ENCODE measurements at regions of chr3 and their contacts with region 1.

Region 1: DNA sequence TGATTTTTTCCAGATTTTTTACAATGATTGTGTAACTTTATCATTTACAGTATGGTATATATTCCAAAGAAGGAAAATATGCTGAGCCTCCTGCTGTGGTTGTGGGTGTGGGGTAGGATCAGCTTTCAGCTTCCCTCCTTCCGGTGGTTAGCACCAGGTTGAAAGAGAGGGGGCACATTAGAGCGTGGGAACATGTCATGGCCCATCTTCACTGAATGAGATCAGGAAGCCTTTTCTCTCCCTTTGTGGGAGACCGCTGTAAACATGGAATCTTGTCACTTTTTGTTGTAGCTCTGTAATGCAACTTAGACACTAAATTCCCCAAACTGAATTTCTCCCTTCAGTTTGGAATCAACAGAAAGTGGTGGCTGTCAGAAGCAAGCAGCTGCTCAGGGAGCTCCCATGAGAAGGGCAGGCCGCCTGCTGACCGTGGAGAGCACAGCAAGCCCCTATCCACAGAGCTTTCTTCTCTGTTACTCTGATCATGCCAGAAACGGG is 86.7 kb upstream of the LIMD1 start:
- DNase-seq: peak; percentile 87
- ATAC-seq: peak; percentile 64
- H3K4me3 ChIP-seq: no peak overlapping the region
- H3K27ac ChIP-seq: peak overlapping the region; percentile 27
- H3K4me1 ChIP-seq: peaks cover 29% of the 10 kb centered on the region
- H3K27me3 ChIP-seq: no peaks in the 10 kb centered on the region
- CTCF ChIP-seq: peak; percentile 62
- POLR2A ChIP-seq: peak; percentile 55
- RAD21 ChIP-seq: peak; percentile 64

Region 2: DNA sequence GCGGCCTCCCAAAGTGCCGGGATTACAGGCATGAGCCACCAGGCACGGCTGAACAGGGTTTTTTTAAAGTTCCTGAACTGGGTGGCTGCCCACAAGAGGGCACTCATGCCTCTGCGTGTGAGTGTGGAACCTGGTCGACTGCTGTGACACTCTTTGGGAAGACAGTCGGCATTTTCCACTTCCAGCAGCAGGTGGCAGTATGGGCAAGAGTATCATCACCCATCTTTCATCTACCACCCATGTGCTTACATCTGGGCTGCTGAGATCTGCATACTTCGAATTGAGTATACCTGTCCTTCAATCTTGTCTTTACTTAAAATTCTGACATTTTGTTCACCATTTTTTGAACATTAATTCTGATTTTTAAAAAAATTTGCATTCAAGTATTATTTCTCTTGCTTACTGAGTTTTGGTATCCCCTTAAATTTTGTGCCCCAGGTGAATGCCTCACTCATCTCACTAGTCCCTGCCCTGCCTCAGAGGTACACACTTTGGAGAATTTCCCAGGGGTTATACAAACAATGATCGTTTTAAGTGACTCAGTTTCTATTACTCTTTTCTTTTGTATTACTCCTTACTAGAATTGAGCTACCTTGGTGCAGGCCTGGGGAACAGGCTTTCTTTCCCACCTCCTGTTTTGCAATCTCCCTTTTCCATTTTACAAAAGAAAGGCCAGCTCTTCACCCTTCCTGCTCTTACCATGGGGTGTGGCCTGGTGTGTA is 470.0 kb before region 1 on chr3:
- CTCF ChIA-PET with region 1: interaction called, 27 read pairs
- POLR2A ChIA-PET with region 1: no interaction called
- dilution Hi-C with region 1: loop called (anchors 25 kb)
- in situ Hi-C with region 1: loop called (anchors 5 kb)
- intact Hi-C with region 1: loop called (anchors 1 kb)
- DNase-seq: peak; percentile 93
- ATAC-seq: peak; percentile 70
- H3K4me3 ChIP-seq: no peak overlapping the region
- H3K27ac ChIP-seq: no peak overlapping the region
- H3K4me1 ChIP-seq: peaks cover 20% of the 10 kb centered on the region
- H3K27me3 ChIP-seq: no peaks in the 10 kb centered on the region
- CTCF ChIP-seq: peak; percentile 98
- POLR2A ChIP-seq: 0 out of 2 replicates have a peak, but pooled peaks have one; percentile 44
- RAD21 ChIP-seq: peak; percentile 98

Region 3: GRCh38 chr3:45055411-45056143 is 452.3 kb before region 1 on chr3:
- CTCF ChIA-PET with region 1: no interaction called
- POLR2A ChIA-PET with region 1: no interaction called
- dilution Hi-C with region 1: no loop called
- in situ Hi-C with region 1: no loop called
- intact Hi-C with region 1: loop called (anchors 5 kb)
- DNase-seq: peak; percentile 96
- ATAC-seq: peak; percentile 68
- H3K4me3 ChIP-seq: peak overlapping the region; percentile 44; the same call in 1 of the 2 replicates
- H3K27ac ChIP-seq: peak overlapping the region; percentile 98
- H3K4me1 ChIP-seq: peaks cover 21% of the 10 kb centered on the region
- H3K27me3 ChIP-seq: no peaks in the 10 kb centered on the region
- CTCF ChIP-seq: peak; percentile 20; the same call in 1 of the 2 replicates
- POLR2A ChIP-seq: no peak
- RAD21 ChIP-seq: no peak

Region 4: DNA sequence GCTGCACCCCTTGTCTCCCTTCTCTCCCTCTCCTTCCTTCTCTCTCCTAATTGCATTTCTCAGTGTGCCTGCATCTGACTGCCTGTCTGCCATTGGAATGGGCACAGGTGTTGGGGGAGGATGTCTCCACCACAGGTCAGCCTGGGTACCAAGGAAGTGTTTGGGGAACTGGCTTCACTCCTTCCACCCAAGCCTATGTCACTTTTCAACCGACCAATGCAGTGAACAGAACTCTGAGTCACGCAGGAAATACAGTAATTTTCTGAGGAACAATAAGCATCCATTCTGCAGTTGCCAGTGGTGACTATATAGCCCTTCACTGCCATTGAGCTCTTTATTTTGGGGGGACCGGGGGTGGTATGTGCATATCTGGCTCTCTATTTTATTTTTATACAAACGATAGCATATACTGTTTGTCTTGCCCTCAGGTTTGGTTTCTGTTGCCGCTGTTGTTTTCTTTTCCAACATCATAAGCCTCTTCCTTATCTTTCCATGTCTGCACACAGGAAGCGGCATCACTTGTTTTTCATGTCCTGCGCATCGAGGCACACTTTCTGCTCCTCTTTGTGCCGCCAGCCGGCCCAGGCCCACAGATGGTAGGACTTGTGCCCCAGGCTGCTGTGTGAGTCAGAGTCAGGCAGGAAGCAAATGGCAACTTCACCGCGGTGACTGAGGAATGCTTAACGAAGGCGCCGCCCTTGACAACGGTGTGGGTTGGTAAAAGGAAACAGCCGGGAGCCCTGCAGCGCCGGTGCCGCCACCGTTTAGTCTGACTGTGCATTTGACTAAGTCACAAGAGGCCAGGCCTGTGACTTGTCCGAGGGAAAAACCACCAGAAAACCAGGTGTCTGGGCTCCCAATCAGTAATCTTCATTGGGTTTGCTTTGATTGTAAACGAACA is 340.6 kb before region 1 on chr3:
- CTCF ChIA-PET with region 1: no interaction called
- POLR2A ChIA-PET with region 1: no interaction called
- dilution Hi-C with region 1: no loop called
- in situ Hi-C with region 1: no loop called
- intact Hi-C with region 1: no loop called
- DNase-seq: peak; percentile 94
- ATAC-seq: peak; percentile 94
- H3K4me3 ChIP-seq: peak overlapping the region; percentile 6; the same call in 1 of the 2 replicates
- H3K27ac ChIP-seq: peak overlapping the region; percentile 78
- H3K4me1 ChIP-seq: peaks cover 17% of the 10 kb centered on the region
- H3K27me3 ChIP-seq: no peaks in the 10 kb centered on the region
- CTCF ChIP-seq: no peak
- POLR2A ChIP-seq: peak; percentile 57; the same call in 1 of the 2 replicates
- RAD21 ChIP-seq: no peak; the same call in 1 of the 2 replicates

Region 5: GRCh38 chr3:45477838-45478237 is 30.0 kb before region 1 on chr3:
- CTCF ChIA-PET with region 1: no interaction called
- POLR2A ChIA-PET with region 1: no interaction called
- dilution Hi-C with region 1: no loop called
- in situ Hi-C with region 1: no loop called
- intact Hi-C with region 1: no loop called
- DNase-seq: no peak
- ATAC-seq: no peak
- H3K4me3 ChIP-seq: no peak overlapping the region
- H3K27ac ChIP-seq: no peak overlapping the region
- H3K4me1 ChIP-seq: peaks cover 9% of the 10 kb centered on the region
- H3K27me3 ChIP-seq: no peaks in the 10 kb centered on the region
- CTCF ChIP-seq: no peak
- POLR2A ChIP-seq: no peak
- RAD21 ChIP-seq: no peak

Region 6: DNA sequence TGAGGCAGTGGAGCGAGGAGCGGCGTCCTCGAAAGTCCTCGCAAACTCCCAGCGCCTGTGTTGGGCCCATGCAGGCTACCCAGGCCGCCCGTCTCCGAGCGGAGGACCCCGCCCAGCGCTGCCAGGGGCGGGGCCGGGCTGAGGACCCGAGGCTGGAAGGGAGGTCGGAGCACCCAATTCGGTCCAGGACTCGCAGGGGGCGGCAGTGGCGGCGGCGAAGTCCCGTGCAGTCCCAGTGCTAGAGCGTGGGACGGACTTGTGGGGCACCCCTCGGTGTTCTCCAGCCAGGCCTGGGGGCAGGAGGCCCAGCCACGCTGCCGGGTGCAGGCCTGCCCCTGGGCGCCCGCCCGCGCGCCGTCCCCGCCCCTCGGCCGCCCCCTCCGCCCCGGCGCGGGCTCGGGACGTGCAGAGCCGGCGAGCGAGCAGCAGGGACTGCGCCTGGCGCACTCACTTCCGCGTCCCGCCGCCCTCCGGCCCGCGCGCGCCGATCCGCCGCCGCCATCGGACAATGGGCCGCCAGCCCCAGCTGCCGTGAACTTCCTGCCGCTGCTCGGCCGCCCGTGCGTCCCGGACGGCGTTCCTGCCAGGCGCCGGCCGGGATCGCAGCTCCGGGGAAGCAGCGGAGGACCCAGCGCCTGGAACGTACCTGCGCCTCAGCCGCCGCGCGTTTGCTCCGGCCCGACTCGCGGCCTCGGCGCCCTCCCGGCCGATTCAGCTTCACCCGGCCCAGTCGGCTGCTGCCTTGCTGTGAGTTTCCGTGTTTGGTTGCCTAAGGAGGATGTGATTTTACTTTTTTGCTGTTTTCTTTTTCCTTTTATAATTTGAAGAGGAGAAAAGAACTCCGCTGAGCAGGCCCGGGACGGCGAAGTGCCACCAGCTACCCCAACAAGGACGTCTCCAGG is 86.1 kb after region 1 on chr3:
- CTCF ChIA-PET with region 1: interaction called, 3 read pairs
- POLR2A ChIA-PET with region 1: no interaction called
- dilution Hi-C with region 1: no loop called
- in situ Hi-C with region 1: no loop called
- intact Hi-C with region 1: loop called (anchors 2 kb)
- DNase-seq: peak; percentile 68
- ATAC-seq: peak; percentile 84
- H3K4me3 ChIP-seq: peak overlapping the region; percentile 77
- H3K27ac ChIP-seq: peak overlapping the region; percentile 83
- H3K4me1 ChIP-seq: peaks cover 28% of the 10 kb centered on the region
- H3K27me3 ChIP-seq: no peaks in the 10 kb centered on the region
- CTCF ChIP-seq: no peak
- POLR2A ChIP-seq: peak; percentile 58
- RAD21 ChIP-seq: no peak

Region 7: DNA sequence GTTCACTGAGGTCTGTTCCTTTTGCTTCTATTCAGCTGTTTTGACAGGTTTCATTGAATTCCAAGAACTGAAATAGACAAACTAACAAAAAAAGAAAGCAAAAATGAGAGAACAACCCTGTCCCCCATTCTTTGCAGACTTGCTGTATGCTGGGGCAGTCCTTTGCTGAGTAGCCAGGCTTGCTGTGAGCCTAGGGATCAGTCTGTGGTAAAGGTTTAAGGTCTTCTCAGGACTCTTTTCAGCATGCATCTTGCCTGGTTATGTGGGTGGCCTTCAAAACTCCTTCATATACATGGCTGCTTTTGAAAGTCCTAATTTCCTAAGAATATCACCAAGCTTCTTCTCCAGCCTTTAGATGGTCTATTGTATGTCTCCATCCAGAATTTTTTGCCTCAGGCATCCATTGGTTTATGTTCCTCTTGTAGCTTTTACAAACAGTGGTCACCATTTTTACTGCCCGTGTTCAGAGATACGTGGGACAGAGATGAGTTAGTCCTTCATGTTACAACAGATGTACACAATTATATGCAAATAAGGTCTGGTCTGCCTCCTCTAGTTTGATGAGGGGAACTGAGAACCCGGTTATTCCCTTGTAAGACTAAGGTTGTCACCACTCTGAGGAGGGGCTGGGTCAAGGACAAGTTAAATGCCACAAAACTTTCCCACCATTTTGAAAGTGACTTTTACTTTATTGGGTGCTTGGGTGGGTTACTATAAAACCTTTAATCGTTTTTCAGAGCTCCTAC is 222.7 kb after region 1 on chr3:
- CTCF ChIA-PET with region 1: no interaction called
- POLR2A ChIA-PET with region 1: no interaction called
- dilution Hi-C with region 1: no loop called
- in situ Hi-C with region 1: no loop called
- intact Hi-C with region 1: loop called (anchors 5 kb)
- DNase-seq: no peak
- ATAC-seq: no peak
- H3K4me3 ChIP-seq: no peak overlapping the region
- H3K27ac ChIP-seq: no peak overlapping the region
- H3K4me1 ChIP-seq: no peaks in the 10 kb centered on the region
- H3K27me3 ChIP-seq: no peaks in the 10 kb centered on the region
- CTCF ChIP-seq: no peak
- POLR2A ChIP-seq: no peak
- RAD21 ChIP-seq: no peak

Region 8: GRCh38 chr3:45783667-45784066 is 275.8 kb after region 1 on chr3:
- CTCF ChIA-PET with region 1: no interaction called
- POLR2A ChIA-PET with region 1: no interaction called
- dilution Hi-C with region 1: no loop called
- in situ Hi-C with region 1: no loop called
- intact Hi-C with region 1: no loop called
- DNase-seq: no peak
- ATAC-seq: no peak
- H3K4me3 ChIP-seq: no peak overlapping the region
- H3K27ac ChIP-seq: no peak overlapping the region
- H3K4me1 ChIP-seq: no peaks in the 10 kb centered on the region
- H3K27me3 ChIP-seq: peaks cover 66% of the 10 kb centered on the region
- CTCF ChIP-seq: no peak
- POLR2A ChIP-seq: no peak
- RAD21 ChIP-seq: no peak

Region 9: DNA sequence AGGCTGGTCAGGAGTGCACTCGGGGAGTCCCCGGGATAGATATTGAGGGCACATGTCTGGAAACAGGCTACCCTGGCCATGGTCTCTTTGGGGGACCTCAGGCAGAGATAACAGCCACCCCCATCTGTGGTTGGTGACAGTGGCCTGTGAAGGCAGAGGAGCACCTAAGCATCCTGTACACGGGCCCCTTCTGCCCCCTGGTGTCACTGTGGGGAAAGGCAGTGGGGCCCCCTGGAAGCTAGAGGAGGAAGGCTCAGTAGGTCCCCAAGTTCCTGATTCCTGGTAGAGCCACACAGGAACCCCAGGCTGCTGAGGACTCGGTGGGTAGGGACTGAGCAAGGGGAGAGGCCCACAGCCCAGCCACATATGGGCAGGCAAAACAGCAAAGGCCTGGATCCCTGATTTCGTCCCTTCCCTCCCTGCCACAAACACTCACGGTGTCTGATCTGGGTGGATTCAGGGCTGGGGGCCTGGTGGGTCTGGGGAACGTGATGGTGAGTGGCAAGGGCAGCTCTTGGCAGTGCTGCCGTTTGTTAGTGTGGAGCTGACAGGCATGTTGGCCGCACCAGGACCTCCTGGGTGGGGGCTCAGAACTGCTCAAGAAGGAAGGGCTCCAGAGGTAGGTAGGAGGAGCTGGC is 421.3 kb after region 1 on chr3:
- CTCF ChIA-PET with region 1: no interaction called
- POLR2A ChIA-PET with region 1: no interaction called
- dilution Hi-C with region 1: no loop called
- in situ Hi-C with region 1: loop called (anchors 5 kb)
- intact Hi-C with region 1: loop called (anchors 1 kb)
- DNase-seq: peak; percentile 26
- ATAC-seq: peak; percentile 93
- H3K4me3 ChIP-seq: no peak overlapping the region
- H3K27ac ChIP-seq: no peak overlapping the region
- H3K4me1 ChIP-seq: peaks cover 8% of the 10 kb centered on the region
- H3K27me3 ChIP-seq: no peaks in the 10 kb centered on the region
- CTCF ChIP-seq: peak; percentile 79
- POLR2A ChIP-seq: no peak
- RAD21 ChIP-seq: peak; percentile 93

Measured in IMR-90 (cell line).